Activated T-helper 1 cell treated with anti-CD3 and anti-CD28 coated beads, Interleukin-12 subunit alpha, Interleukin-12 subunit beta, Interleukin-2, Interleukin-4 antibody, amounts not matched to agents 30 ng/mL and 10 ng/mL and 1 ng/mL, durations not matched to agents 14 hours and 24 hours and 36 hours (primary cell): ENCODE measurements at regions of chr6 and their contacts with region 1.

Region 1: DNA sequence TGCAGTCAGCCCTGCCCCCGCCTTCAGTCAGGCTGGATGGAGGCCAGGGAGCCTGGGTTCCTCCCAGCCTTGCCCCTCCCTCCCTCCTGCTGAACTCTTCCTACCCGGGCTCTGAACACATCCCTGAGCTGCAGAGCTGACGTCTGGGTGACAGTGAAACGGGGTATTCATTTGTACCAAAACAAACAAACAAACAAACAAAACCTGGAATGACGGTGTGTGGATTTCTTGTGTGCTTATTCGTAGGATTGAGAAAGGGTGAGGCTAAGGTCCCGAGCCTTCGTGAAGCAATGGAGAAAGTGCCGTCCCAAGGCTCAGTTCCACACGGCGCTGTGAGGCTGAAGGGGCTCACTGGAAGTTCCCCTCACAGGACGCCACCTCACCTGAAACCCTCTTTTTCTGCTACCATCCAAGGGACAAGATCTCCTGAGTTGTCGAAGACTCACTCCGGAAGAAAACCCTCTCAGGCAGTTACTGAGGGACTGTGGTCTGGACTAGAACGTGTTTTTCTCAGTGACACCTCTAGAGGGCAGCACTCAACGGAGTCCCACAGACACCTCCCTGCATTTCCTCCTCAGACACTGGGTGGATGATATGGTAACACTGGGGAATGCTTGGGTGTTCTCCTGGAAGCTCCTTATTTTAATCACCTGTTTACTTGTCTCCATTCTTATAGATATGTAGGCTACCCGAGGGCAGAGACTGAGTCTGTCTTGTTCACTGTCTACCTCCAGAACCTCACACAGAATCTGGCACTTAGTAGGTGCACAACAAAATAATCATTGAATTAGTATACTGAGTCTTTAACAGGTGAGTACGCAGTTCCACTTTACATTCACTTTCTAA is 27.3 kb downstream of the GSTA3 start:
- DNase-seq: peak; percentile 46
- H3K4me3 Mint-ChIP-seq: peak overlapping the region; percentile 78
- H3K27ac Mint-ChIP-seq: peak overlapping the region; percentile 11
- H3K4me1 Mint-ChIP-seq: peaks cover 17% of the 10 kb centered on the region
- H3K27me3 Mint-ChIP-seq: peaks cover 2% of the 10 kb centered on the region

Region 2: GRCh38 chr6:52551401-52552277 is 330.6 kb before region 1 on chr6:
- intact Hi-C with region 1: no loop called
- DNase-seq: no peak
- H3K4me3 Mint-ChIP-seq: no peak overlapping the region
- H3K27ac Mint-ChIP-seq: no peak overlapping the region
- H3K4me1 Mint-ChIP-seq: no peaks in the 10 kb centered on the region
- H3K27me3 Mint-ChIP-seq: no peaks in the 10 kb centered on the region

Region 3: DNA sequence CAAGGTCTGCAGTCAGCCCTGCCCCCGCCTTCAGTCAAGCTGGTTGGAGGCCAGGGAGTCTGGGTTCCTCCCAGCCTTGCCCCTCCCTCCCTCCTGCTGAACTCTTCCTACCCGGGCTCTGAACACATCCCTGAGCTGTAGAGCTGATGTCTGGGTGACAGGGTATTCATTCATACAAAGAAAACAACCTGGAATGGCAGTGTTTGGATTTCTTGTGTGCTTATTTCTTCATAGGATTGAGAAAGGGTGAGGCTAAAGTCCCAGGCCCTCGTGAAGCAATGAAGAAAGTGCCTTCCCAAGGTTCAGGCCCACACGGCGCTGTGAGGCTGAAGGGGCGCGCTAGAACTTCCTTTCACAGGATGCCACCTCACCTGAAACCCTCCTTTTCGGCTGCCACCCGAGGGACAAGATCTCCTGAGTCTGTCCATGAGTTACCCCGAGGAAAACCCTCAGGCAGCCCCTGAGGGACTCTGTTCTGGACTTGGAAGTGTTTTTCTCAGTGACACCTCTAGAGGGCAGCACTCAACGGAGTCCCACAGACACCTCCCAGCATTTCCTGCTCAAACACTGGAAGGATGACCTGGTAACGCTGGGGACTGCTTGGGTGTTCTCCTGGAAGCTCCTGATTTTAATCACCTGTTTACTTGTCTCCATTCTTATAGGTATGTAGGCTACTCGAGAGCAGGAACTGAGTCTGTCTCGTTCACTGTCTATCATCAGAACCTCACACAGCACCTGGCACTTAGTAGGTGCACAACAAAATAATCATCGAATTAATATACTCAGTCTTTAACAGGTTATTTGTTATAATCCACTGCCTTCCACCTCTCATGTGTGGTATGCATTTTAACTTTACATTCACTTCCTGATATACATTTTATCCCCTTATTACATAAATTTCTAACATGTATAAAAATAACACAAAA is 66.8 kb before region 1 on chr6:
- intact Hi-C with region 1: loop called (anchors 5 kb)
- DNase-seq: peak; percentile 3
- H3K4me3 Mint-ChIP-seq: no peak overlapping the region
- H3K27ac Mint-ChIP-seq: no peak overlapping the region
- H3K4me1 Mint-ChIP-seq: no peaks in the 10 kb centered on the region
- H3K27me3 Mint-ChIP-seq: peaks cover 5% of the 10 kb centered on the region

Region 4: DNA sequence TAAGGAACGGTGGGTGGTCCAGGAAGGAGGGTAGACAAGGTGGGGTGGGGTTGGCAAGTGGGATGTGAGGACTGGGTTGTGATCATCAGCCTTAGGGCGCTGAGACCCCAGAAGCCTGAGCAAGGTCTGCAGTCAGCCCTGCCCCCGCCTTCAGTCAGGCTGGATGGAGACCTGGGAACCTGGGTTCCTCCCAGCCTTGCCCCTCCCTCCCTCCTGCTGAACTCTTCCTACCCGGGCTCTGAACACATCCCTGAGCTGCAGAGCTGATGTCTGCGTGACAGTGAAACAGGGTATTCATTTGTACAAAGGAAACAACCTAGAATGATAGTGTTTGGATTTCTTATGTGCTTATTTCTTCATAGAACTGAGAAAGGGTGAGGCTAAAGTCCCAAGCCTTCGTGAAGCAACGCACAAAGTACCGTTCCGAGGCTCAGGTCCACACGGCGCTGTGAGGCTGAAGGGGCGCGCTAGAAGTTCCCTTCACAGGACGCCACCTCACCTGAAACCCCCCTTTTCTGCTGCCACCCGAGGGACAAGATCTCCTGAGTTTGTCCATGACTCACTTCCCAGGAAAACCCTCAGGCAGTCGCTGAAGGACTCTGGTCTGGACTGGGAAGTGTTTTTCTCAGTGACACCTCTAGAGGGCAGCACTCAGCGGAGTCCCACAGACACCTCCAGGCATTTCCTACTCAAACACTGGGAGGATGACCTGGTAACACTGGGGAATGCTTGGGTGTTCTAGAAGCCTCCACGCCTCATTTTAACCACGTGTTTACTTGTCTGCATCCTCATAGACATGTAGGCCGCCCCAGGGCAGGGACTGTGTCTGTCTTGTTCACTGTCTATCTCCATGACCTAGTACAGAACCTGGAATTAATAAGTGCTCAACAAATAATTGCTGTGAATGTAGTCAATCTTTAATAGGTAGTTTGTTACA is 42.8 kb before region 1 on chr6:
- intact Hi-C with region 1: loop called (anchors 2 kb)
- DNase-seq: peak; percentile 2
- H3K4me3 Mint-ChIP-seq: no peak overlapping the region
- H3K27ac Mint-ChIP-seq: no peak overlapping the region
- H3K4me1 Mint-ChIP-seq: peaks cover 6% of the 10 kb centered on the region
- H3K27me3 Mint-ChIP-seq: peaks cover 19% of the 10 kb centered on the region

Region 5: GRCh38 chr6:52893803-52894649 is 11.8 kb after region 1 on chr6:
- intact Hi-C with region 1: no loop called
- DNase-seq: no peak
- H3K4me3 Mint-ChIP-seq: no peak overlapping the region
- H3K27ac Mint-ChIP-seq: no peak overlapping the region
- H3K4me1 Mint-ChIP-seq: peaks cover 8% of the 10 kb centered on the region
- H3K27me3 Mint-ChIP-seq: peaks cover 3% of the 10 kb centered on the region